ENCODE measurements at regions of chr10 and their contacts with region 1.

Region 1: GRCh38 chr10:89029785-89030437 is 39.3 kb downstream of the FAS start:
- DNase-seq: peak; percentile 52 to 65
- H3K4me3 ChIP-seq: no peak overlapping the region
- H3K27ac ChIP-seq: no peak overlapping the region
- H3K4me1 ChIP-seq: peaks cover 0 to 10% of the 10 kb centered on the region in 2 donors
- H3K27me3 ChIP-seq: no peaks in the 10 kb centered on the region
- CTCF ChIP-seq: peak; percentile 74 to 90 (median 89)
- POLR2A ChIP-seq: no peak

Region 2: DNA sequence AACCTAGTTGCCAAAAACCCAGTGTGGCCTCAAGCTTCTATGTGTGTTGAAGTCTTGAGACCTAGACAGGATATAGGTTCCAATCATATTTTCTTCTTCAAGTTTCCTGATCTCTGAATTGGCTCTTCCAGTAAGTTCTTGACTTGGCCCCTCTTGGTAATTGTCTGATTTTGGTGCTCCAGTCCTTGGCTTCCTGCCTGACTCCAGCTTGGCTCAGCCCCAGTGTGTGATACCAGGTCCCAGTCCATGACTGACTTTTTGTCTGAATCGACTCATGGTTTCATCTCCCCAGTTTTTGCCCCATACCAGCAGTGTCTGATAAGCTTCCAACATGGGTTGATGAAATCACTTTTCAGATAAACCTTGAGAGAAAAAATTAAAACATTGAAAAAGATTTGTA is 33.0 kb after region 1 on chr10:
- intact Hi-C with region 1: loop called (anchors 1 kb)
- DNase-seq: peak in 1 of 2 donors; percentile 28
- H3K4me3 ChIP-seq: no peak overlapping the region
- H3K27ac ChIP-seq: no peak overlapping the region
- H3K4me1 ChIP-seq: no peaks in the 10 kb centered on the region
- H3K27me3 ChIP-seq: no peaks in the 10 kb centered on the region
- CTCF ChIP-seq: no peak
- POLR2A ChIP-seq: no peak

Region 3: GRCh38 chr10:89076120-89076519 is 46.2 kb after region 1 on chr10:
- intact Hi-C with region 1: loop called (anchors 2 kb)
- DNase-seq: no peak
- H3K4me3 ChIP-seq: no peak overlapping the region
- H3K27ac ChIP-seq: no peak overlapping the region
- H3K4me1 ChIP-seq: no peaks in the 10 kb centered on the region
- H3K27me3 ChIP-seq: no peaks in the 10 kb centered on the region
- CTCF ChIP-seq: no peak
- POLR2A ChIP-seq: no peak

Region 4: GRCh38 chr10:89213191-89213808 is 183.4 kb after region 1 on chr10:
- intact Hi-C with region 1: loop called (anchors 5 kb)
- DNase-seq: no peak
- H3K4me3 ChIP-seq: no peak overlapping the region
- H3K27ac ChIP-seq: no peak overlapping the region
- H3K4me1 ChIP-seq: no peaks in the 10 kb centered on the region
- H3K27me3 ChIP-seq: peaks cover 0 to 3% of the 10 kb centered on the region in 2 donors
- CTCF ChIP-seq: peak; percentile 25 to 80 (median 66)
- POLR2A ChIP-seq: no peak

Region 5: DNA sequence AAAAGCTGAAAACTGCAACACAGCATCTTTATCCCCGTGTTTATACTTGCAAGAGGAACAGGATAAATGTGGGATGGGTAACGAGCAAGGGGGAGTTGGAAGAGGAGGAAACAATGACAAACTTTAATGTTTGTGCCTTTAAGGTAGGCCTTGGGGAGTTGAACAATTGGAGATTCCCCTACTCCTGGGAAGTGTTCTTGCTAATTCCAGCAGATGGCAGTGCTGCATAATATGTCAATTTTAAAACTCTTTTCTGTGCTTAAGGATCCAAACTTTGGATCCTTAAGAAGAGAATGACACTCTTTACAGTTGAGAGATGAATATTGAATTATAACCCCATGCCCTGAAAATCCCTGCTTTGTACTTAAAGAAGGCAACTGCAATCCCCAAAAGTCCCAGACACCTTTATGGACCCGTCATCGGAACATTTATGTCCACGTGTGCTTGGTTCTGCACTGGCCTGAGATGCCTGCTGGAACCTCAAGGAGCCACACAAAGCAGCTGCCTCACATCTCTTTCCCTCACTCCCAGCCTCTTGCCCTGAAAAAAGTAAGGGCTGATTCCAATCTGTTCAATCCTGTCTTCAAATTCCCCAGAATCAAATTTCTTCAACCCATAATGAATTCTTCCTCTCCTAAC is 396.4 kb after region 1 on chr10:
- intact Hi-C with region 1: no loop called
- DNase-seq: no peak
- H3K4me3 ChIP-seq: no peak overlapping the region
- H3K27ac ChIP-seq: no peak overlapping the region
- H3K4me1 ChIP-seq: no peaks in the 10 kb centered on the region
- H3K27me3 ChIP-seq: no peaks in the 10 kb centered on the region
- CTCF ChIP-seq: peak; percentile 62 to 82 (median 81)
- POLR2A ChIP-seq: no peak

Measured in breast epithelium (tissue), 4 donors.